ENCODE measurements at regions of chr7 and their contacts with region 1.

Region 1: GRCh38 chr7:143214789-143215679 is 6.8 kb upstream of the TAS2R40 start:
- DNase-seq: peak; percentile 49 to 66
- H3K4me3 ChIP-seq: no peak overlapping the region
- H3K27ac ChIP-seq: no peak overlapping the region
- H3K4me1 ChIP-seq: no peaks in the 10 kb centered on the region
- H3K27me3 ChIP-seq: no peaks in the 10 kb centered on the region
- CTCF ChIP-seq: peak in 2 of 3 experiments; percentile 99 to 100; a peak in 3 of 4 replicates
- EP300 ChIP-seq: no peak
- POLR2A ChIP-seq: no peak
- RAD21 ChIP-seq: peak; percentile 100

Region 2: GRCh38 chr7:142873281-142873787 is 341.7 kb before region 1 on chr7:
- CTCF ChIA-PET with region 1: interaction called, 21 read pairs
- POLR2A ChIA-PET with region 1: no interaction called
- DNase-seq: peak in 1 of 2 experiments; percentile 84
- H3K4me3 ChIP-seq: no peak overlapping the region
- H3K27ac ChIP-seq: no peak overlapping the region
- H3K4me1 ChIP-seq: no peaks in the 10 kb centered on the region; a peak in 1 of 7 replicates
- H3K27me3 ChIP-seq: no peaks in the 10 kb centered on the region; a peak in 1 of 7 replicates
- CTCF ChIP-seq: peak; percentile 83 to 94 (median 90)
- EP300 ChIP-seq: no peak
- POLR2A ChIP-seq: no peak
- RAD21 ChIP-seq: peak; percentile 54 to 63

Region 3: GRCh38 chr7:143002106-143002505 is 212.9 kb before region 1 on chr7:
- CTCF ChIA-PET with region 1: interaction called, 480 read pairs
- POLR2A ChIA-PET with region 1: no interaction called
- DNase-seq: no peak
- H3K4me3 ChIP-seq: no peak overlapping the region
- H3K27ac ChIP-seq: no peak overlapping the region
- H3K4me1 ChIP-seq: no peaks in the 10 kb centered on the region
- H3K27me3 ChIP-seq: no peaks in the 10 kb centered on the region
- CTCF ChIP-seq: peak in 2 of 3 experiments; percentile 53 to 64; a peak in 3 of 4 replicates
- EP300 ChIP-seq: no peak
- POLR2A ChIP-seq: no peak
- RAD21 ChIP-seq: peak; percentile 79 to 86

Region 4: GRCh38 chr7:143049362-143049761 is 165.7 kb before region 1 on chr7:
- CTCF ChIA-PET with region 1: interaction called, 24 read pairs
- POLR2A ChIA-PET with region 1: no interaction called
- DNase-seq: no peak
- H3K4me3 ChIP-seq: no peak overlapping the region
- H3K27ac ChIP-seq: no peak overlapping the region
- H3K4me1 ChIP-seq: no peaks in the 10 kb centered on the region
- H3K27me3 ChIP-seq: no peaks in the 10 kb centered on the region
- CTCF ChIP-seq: no peak
- EP300 ChIP-seq: no peak
- POLR2A ChIP-seq: no peak
- RAD21 ChIP-seq: no peak

Region 5: GRCh38 chr7:143188994-143189393 is 26.0 kb before region 1 on chr7:
- CTCF ChIA-PET with region 1: interaction called, 12 read pairs
- POLR2A ChIA-PET with region 1: no interaction called
- DNase-seq: no peak
- H3K4me3 ChIP-seq: no peak overlapping the region
- H3K27ac ChIP-seq: no peak overlapping the region
- H3K4me1 ChIP-seq: peaks cover 0 to 6% (median 1%) of the 10 kb centered on the region in 4 experiments; a peak in 3 of 7 replicates
- H3K27me3 ChIP-seq: no peaks in the 10 kb centered on the region
- CTCF ChIP-seq: no peak
- EP300 ChIP-seq: no peak
- POLR2A ChIP-seq: no peak
- RAD21 ChIP-seq: no peak

Region 6: GRCh38 chr7:143240291-143241168 is 25.5 kb after region 1 on chr7:
- CTCF ChIA-PET with region 1: interaction called, 37 read pairs
- POLR2A ChIA-PET with region 1: no interaction called
- DNase-seq: peak in 1 of 2 experiments; percentile 58
- H3K4me3 ChIP-seq: no peak overlapping the region
- H3K27ac ChIP-seq: no peak overlapping the region
- H3K4me1 ChIP-seq: no peaks in the 10 kb centered on the region
- H3K27me3 ChIP-seq: no peaks in the 10 kb centered on the region; a peak in 1 of 7 replicates
- CTCF ChIP-seq: peak; percentile 15 to 85 (median 83)
- EP300 ChIP-seq: no peak
- POLR2A ChIP-seq: no peak
- RAD21 ChIP-seq: peak; percentile 87 to 92

Region 7: GRCh38 chr7:143269251-143269650 is 54.2 kb after region 1 on chr7:
- CTCF ChIA-PET with region 1: no interaction called
- POLR2A ChIA-PET with region 1: no interaction called
- DNase-seq: no peak
- H3K4me3 ChIP-seq: no peak overlapping the region
- H3K27ac ChIP-seq: no peak overlapping the region
- H3K4me1 ChIP-seq: 0 out of 7 replicates have a peak, but pooled peaks cover 0 to 2% (median 0%) of the 10 kb centered on the region in 4 experiments
- H3K27me3 ChIP-seq: peaks cover 0 to 3% (median 0%) of the 10 kb centered on the region in 4 experiments; a peak in 2 of 7 replicates
- CTCF ChIP-seq: no peak
- EP300 ChIP-seq: no peak
- POLR2A ChIP-seq: no peak
- RAD21 ChIP-seq: no peak

Region 8: GRCh38 chr7:143372070-143372469 is 157.0 kb after region 1 on chr7:
- CTCF ChIA-PET with region 1: no interaction called
- POLR2A ChIA-PET with region 1: no interaction called
- DNase-seq: no peak
- H3K4me3 ChIP-seq: no peak overlapping the region
- H3K27ac ChIP-seq: no peak overlapping the region
- H3K4me1 ChIP-seq: peaks cover 6 to 22% (median 13%) of the 10 kb centered on the region in 4 experiments; a peak in 5 of 7 replicates
- H3K27me3 ChIP-seq: no peaks in the 10 kb centered on the region
- CTCF ChIP-seq: peak in 1 of 3 experiments; percentile 21; a peak in 1 of 4 replicates
- EP300 ChIP-seq: no peak
- POLR2A ChIP-seq: no peak
- RAD21 ChIP-seq: peak; percentile 14 to 28; a peak in 1 of 4 replicates

Region 9: DNA sequence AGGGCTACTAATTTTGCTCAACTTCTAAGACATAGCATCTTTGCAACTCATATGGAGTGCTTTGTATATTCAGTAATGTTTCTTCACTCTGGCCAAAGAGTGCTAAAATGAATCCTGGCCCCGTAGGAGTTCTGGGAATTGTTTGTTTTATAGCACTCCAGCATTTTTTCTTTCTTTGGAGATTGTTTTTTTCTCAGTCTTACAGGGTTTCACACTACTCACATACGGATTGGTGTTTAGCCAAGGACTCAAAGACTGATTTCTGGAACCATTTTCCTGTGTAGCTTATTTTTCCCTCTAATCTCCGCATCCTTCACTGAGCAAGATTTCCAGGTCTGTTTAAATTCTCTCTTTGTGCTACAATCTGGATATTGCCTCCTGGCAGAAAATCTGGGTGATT is 269.1 kb after region 1 on chr7:
- CTCF ChIA-PET with region 1: no interaction called
- POLR2A ChIA-PET with region 1: no interaction called
- DNase-seq: no peak
- H3K4me3 ChIP-seq: no peak overlapping the region
- H3K27ac ChIP-seq: no peak overlapping the region
- H3K4me1 ChIP-seq: no peaks in the 10 kb centered on the region
- H3K27me3 ChIP-seq: no peaks in the 10 kb centered on the region
- CTCF ChIP-seq: no peak
- EP300 ChIP-seq: no peak
- POLR2A ChIP-seq: no peak
- RAD21 ChIP-seq: no peak

Measured in H1 (cell line).